ENCODE measurements at regions of chr2 and their contacts with region 1.

Region 1: DNA sequence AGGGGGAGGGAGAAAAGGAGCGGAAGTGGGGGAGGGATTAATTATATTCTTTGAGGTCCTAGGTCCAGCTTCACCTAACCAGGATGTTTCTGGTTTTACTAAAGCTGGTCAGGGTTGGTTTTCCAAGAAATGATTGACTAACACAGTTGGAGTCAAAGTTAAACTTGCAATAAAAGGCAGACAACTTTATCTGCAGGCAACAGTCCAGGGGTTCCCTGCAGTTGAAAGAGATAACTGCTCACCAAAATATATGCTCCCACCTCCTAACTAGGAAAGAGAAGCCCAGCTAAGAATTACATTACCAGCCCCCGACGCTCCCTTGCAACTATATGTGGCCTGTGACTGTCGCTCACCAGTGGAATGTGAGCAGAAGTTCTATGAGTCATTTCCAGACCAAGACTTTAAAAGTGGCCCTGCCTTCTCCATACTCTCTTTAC is 140.0 kb upstream of the PKDCC start:
- DNase-seq: no peak
- ATAC-seq: no peak
- H3K4me3 ChIP-seq: no peak overlapping the region
- H3K27ac ChIP-seq: no peak overlapping the region
- H3K4me1 ChIP-seq: no peaks in the 10 kb centered on the region
- H3K27me3 ChIP-seq: no peaks in the 10 kb centered on the region

Region 2: DNA sequence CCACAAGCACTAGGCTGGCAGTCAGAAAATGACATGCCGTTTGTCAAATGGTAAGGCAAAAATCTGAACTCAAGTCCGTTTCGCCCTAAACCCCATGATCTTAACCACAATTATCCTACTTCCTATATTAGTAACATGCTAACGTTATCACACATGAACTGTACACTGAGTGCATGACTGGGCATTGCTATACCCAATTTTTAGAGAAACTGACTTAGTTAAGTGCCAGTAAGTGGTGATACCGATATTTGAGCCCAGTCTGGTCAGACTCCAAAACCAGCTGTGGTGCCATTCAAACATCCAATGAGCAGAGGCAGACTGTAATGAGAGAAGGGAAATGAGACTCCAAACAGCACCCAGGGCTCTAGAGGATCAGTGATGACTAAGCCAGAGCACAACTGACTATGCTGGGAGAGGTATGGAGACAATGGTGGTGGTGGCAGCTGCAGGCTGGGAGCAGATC is 171.7 kb before region 1 on chr2:
- intact Hi-C with region 1: no loop called
- DNase-seq: peak in 1 of 2 donors; percentile 45
- ATAC-seq: peak; percentile 11
- H3K4me3 ChIP-seq: no peak overlapping the region
- H3K27ac ChIP-seq: no peak overlapping the region
- H3K4me1 ChIP-seq: peaks cover 1 to 4% of the 10 kb centered on the region in 2 donors
- H3K27me3 ChIP-seq: no peaks in the 10 kb centered on the region

Region 3: GRCh38 chr2:41896186-41896846 is 11.5 kb before region 1 on chr2:
- intact Hi-C with region 1: loop called in 1 of 2 experiments (anchors 1 kb)
- DNase-seq: no peak
- ATAC-seq: no peak
- H3K4me3 ChIP-seq: no peak overlapping the region
- H3K27ac ChIP-seq: peak overlapping the region in 1 of 2 donors; percentile 42
- H3K4me1 ChIP-seq: peaks cover 5 to 9% of the 10 kb centered on the region in 2 donors
- H3K27me3 ChIP-seq: no peaks in the 10 kb centered on the region